ENCODE measurements at regions of chr16 and their contacts with region 1.

Region 1: DNA sequence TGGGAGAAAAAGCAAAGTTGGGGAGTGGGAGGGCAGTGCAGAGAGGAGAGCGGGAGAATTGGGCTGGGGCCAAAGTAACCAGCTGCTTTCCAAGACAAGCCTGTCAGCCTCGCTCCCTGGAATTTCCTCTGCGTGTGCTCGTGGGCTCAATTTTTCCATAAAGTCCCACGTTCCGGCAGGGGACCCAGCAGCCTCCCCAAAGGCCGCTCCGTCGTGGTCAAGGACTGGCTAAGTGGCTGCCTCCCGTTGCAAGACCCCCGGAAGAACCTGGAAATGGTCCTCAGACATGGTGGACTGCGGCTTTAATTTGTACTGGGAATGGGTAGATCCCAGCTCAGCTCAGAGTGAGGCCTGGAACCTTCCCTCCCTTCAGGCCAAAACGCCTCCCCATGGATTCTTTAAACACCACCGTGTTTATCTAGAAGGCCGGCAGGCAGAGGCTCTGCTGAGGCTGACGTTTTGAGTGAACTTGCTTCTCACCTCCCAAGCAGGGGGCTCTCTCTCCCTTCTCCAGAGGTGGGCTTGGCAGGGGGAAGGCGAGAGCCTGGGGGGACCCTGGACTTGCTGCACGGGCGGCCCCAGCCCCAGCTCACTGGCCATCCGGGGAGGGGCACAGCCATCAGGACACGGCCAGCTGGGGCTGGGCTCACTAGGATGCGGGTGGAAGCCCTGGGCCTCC is 190.0 kb downstream of the C16orf95 start:
- DNase-seq: peak in 1 of 2 donors; percentile 73
- H3K4me3 ChIP-seq: peak overlapping the region in 1 of 2 donors; percentile 39
- H3K27ac ChIP-seq: peak overlapping the region; percentile 90 to 92
- H3K4me1 ChIP-seq: peaks cover 17 to 23% of the 10 kb centered on the region in 2 donors
- H3K27me3 ChIP-seq: no peaks in the 10 kb centered on the region
- CTCF ChIP-seq: peak in 1 of 3 experiments; percentile 9

Region 2: DNA sequence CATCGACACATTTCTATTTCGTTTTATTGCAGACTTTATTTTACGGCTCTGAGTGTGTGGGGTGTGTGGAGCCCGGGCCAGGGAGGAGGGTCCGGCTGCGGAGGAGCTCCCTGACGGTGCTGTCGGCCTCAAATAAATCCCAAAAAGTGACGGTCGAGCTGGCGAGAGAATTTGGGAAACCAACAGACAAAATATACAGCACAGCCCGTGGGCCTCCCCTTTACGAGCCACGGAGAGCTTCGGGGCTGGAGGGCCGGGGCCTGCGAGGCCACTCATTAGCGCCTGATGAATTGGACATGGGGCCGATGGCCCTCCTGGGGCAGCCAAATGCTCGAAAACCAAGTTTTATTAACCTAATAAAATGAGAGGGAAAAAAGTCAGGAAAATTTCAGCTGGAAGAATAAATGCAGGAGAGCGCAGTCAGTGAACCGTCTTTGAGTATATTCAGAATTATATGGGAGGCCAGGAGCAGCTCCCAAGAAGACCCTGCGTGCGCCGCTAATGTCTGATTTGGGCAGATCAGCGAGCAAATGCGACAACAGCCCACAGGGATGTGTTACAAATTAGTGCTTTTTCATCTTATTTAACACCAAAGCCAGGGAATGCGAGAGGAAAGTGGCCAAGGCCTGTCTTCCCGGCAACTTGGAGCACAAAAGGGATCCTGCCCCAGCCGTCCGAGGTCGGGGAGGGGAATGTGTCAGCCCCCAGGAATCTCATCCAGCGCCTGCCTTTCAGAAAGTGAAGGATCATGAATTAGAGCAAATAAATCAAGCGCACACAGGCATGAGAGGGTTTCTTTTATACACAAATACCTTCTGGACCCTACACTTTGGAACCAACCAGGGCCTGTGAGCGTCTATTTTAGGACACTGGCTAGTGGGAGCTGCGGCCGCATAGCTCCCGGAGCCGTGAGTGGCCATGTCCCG is 59.1 kb before region 1 on chr16:
- intact Hi-C with region 1: loop called (anchors 5 kb)
- DNase-seq: no peak
- H3K4me3 ChIP-seq: peak overlapping the region in 1 of 2 donors; percentile 44
- H3K27ac ChIP-seq: peak overlapping the region; percentile 77 to 83
- H3K4me1 ChIP-seq: peaks cover 0 to 5% of the 10 kb centered on the region in 2 donors
- H3K27me3 ChIP-seq: no peaks in the 10 kb centered on the region
- CTCF ChIP-seq: no peak

Region 3: GRCh38 chr16:87178977-87179376 is 51.8 kb after region 1 on chr16:
- intact Hi-C with region 1: loop called (anchors 1 kb)
- DNase-seq: peak in 1 of 2 donors; percentile 81
- H3K4me3 ChIP-seq: no peak overlapping the region
- H3K27ac ChIP-seq: peak overlapping the region; percentile 54 to 76
- H3K4me1 ChIP-seq: peaks cover 0 to 12% of the 10 kb centered on the region in 2 donors
- H3K27me3 ChIP-seq: no peaks in the 10 kb centered on the region
- CTCF ChIP-seq: no peak

Region 4: DNA sequence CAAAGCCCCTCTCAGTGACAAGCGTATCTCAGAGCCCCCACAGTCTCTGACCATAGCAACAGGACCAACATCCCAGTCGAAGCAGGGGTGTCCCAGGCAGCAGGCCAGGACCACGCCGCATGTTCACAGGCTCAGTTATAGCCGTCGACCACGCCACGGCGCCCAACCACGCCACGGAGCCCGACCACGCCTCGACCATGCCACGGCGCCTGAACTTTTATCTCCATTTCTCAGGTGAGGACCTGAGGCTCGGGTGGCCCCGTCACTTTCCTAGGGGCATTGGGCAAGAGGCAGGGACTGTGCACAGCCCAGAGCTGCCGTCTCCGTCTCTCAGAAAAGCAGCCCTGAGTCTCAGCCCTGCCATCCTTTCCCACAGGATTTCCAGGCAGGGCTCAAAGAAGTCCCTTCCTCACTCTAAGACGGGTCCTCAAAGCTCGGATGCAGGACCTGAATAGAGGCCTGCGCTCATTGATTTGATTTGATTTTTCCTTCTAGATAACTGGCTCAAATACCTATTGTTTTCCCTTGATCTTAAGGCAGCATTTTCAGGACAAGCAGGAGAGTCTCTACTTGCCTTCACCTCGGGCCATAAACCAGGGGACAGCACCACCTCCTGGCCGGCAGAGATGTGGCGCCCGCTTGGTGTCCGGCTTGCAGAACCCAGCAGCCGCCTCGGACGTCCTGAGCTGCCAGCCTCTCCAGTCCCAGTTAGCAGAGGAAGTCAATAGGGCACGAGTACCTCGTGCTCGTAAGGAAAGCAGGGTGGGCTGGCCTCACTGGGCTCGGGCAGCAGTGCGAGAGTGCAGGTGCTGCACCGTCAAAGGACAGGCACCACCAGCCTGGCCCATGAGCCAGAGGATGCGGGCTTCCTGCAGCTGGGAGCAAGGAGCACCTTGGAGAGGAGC is 151.2 kb after region 1 on chr16:
- intact Hi-C with region 1: loop called (anchors 2 kb)
- DNase-seq: peak in 1 of 2 donors; percentile 88
- H3K4me3 ChIP-seq: no peak overlapping the region
- H3K27ac ChIP-seq: no peak overlapping the region
- H3K4me1 ChIP-seq: no peaks in the 10 kb centered on the region
- H3K27me3 ChIP-seq: no peaks in the 10 kb centered on the region
- CTCF ChIP-seq: peak; percentile 86 to 92 (median 89)